Activated CD4-positive, alpha-beta memory T cell treated with anti-CD3 and anti-CD28 coated beads, Interleukin-2, amount 10 ng/mL, durations not matched to agents 7 days and 5 days (primary cell): ENCODE measurements at regions of chr19 and their contacts with region 1.

Region 1: GRCh38 chr19:38374429-38375176 is at the start of gene PSMD8:
- DNase-seq: peak; percentile 99
- H3K4me3 Mint-ChIP-seq: peak within 1 kb of the TSS; percentile 97
- H3K27ac Mint-ChIP-seq: peak within 1 kb of the TSS; percentile 92
- H3K4me1 Mint-ChIP-seq: peaks cover 30% of the 10 kb centered on the region
- H3K27me3 Mint-ChIP-seq: peaks cover 9% of the 10 kb centered on the region
- total RNA-seq, gene PSMD8: 167 to 178 TPM

Region 2: DNA sequence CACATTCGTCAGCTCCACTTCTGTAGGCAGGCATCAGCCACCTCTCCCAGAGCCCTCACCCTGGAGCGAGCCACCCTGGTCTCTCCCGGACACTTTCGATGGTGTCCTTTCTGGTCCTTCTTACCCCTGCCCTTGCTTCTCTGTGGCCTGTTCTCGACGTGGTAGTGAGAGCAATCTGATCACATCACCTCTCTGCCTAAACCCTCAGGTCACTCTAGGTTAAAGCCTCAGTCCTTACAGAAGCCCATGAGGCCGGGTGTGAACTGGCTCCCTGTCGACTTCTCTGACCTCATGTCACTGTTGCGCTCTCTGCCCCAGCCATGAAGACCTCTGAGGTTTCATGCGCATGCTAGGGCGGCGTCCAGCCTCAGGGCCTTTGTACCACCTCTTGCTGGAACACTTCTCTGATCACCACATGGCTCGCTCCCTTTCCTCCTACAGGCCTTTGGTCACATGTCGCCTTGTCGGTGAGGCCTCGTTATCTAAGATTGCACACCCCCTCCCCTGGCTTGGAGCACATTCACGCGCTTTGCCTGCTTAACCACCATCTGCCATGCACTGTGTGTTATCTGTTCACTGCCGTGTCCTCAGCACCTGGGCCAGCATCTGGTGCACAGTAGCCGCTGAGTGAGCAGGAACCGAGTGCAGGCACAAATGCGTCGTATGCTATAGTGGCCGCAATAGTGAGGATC is 252.1 kb before region 1 on chr19:
- CTCF ChIA-PET with region 1: no interaction called
- POLR2A ChIA-PET with region 1: no interaction called
- DNase-seq: no peak
- H3K4me3 Mint-ChIP-seq: no peak overlapping the region
- H3K27ac Mint-ChIP-seq: no peak overlapping the region
- H3K4me1 Mint-ChIP-seq: no peaks in the 10 kb centered on the region
- H3K27me3 Mint-ChIP-seq: no peaks in the 10 kb centered on the region

Region 3: DNA sequence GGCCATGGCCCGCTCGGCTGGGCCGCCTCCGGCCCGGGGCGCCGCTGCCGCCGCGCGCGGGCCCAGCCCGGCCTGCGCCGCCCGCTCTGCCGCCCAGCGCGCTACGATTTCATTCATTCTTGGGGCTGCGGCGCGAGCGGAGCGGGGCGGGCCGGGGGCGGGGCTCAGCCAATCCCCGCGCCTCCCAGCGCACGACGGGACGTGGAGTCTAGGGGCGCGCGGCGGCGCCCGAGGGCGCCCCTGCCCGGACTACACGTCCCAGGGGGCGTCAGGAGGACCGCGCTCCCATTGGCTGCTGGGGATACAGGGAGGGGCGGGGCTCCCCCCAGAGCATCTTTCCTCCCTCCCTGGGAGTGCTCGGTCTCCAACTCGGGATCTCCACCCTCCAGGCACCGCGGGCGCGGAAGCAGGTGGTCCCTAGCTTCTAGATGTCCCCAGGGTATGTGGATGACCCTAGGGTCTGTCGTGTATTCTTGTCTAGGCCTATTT is 145.0 kb before region 1 on chr19:
- CTCF ChIA-PET with region 1: interaction called, 12 read pairs
- POLR2A ChIA-PET with region 1: interaction called, 3 read pairs
- DNase-seq: peak; percentile 67
- H3K4me3 Mint-ChIP-seq: no peak overlapping the region
- H3K27ac Mint-ChIP-seq: no peak overlapping the region
- H3K4me1 Mint-ChIP-seq: peaks cover 7% of the 10 kb centered on the region
- H3K27me3 Mint-ChIP-seq: peaks cover 47% of the 10 kb centered on the region

Region 4: DNA sequence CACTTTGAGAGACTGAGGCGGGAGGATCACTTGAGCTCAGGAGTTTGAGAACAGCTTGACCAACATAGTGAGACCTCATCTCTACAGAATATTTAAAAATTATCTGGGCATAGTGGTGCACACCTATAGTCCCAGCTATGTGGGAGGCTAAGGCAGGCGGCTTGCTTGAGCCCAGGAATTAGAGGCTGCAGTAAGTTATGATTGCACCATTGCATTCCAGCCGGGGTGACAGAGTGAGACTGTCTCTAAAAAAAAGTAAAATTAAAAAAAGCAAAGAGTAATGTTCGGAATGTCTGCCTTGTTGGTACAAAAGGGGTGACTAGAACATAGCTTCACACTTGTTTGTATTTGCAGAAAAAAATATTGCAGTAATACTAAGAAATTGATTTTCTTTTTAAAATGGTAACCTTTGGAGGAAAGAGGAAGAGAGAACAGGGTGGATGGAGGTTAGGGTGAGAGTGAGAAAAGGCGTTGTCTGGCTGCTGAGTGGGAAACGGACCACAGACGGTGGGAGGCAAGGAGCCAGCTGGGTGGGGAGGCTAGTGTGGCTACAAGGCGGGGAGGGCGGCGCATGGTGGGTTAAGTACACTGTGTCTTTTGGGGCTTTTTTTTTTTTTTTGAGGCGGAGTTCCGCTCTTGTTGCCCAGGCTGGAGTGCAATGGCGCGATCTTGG is 128.6 kb before region 1 on chr19:
- CTCF ChIA-PET with region 1: interaction called, 20 read pairs
- POLR2A ChIA-PET with region 1: no interaction called
- DNase-seq: no peak
- H3K4me3 Mint-ChIP-seq: no peak overlapping the region
- H3K27ac Mint-ChIP-seq: no peak overlapping the region
- H3K4me1 Mint-ChIP-seq: peaks cover 5% of the 10 kb centered on the region
- H3K27me3 Mint-ChIP-seq: no peaks in the 10 kb centered on the region

Region 5: DNA sequence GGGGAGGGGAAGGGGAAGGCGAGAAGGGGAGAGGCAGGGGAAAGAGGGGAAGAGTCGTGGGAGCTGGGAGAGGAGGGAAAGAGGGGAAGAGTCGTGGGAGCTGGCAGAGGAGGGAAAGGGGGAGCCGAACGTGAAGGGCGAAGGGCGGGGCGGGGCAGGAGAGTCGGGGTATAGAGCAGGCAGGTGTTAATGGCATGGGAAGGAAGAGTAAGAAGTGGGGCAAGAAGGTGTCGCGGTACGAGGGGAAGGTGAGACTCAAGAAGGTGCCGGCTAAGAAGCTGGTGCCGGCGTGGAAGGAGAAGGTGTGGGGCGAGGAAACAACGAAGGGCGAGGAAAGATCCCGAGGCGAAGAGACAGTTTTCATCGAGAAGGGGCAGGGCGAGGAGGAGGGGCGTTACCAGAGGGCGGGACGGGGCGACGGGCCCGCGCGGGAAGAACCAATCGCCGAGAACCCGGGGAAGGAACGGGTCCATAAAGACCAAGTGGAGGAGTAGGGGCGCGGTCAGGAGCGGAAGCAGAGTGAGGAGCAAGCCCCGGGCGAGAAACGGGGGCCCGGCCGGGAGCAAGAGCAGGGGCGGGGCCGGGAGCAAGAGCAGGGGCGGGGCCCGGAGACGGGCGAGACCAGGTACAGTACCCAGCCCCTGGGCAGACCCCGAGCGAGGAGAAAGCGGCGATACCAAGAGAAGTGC is 38.5 kb before region 1 on chr19:
- CTCF ChIA-PET with region 1: interaction called, 45 read pairs
- POLR2A ChIA-PET with region 1: interaction called, 27 read pairs
- DNase-seq: peak; percentile 97
- H3K4me3 Mint-ChIP-seq: peak overlapping the region; percentile 82
- H3K27ac Mint-ChIP-seq: peak overlapping the region; percentile 95
- H3K4me1 Mint-ChIP-seq: peaks cover 12% of the 10 kb centered on the region
- H3K27me3 Mint-ChIP-seq: no peaks in the 10 kb centered on the region

Region 6: DNA sequence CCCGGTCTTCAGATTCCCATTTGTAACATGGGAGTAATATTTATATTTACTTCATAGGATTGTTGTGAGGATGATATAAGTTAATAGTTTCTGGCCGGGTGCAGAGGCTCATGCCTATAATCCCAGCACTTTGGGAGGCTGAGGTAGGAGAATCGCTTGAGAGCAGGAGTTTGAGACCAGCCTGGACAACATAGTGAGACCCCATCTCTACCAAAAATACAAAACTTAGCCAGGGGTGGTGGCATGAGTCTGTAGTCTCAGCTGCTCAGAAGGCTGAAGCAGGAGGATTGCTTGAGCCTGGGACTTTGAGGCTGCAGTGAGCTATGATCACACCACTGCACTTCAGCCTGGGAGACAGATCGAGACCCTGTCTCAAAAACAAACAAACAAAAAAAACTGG is 27.8 kb before region 1 on chr19:
- CTCF ChIA-PET with region 1: no interaction called
- POLR2A ChIA-PET with region 1: no interaction called
- DNase-seq: no peak
- H3K4me3 Mint-ChIP-seq: no peak overlapping the region
- H3K27ac Mint-ChIP-seq: no peak overlapping the region
- H3K4me1 Mint-ChIP-seq: no peaks in the 10 kb centered on the region
- H3K27me3 Mint-ChIP-seq: no peaks in the 10 kb centered on the region

Region 7: GRCh38 chr19:38361633-38362075 is 12.9 kb before region 1 on chr19:
- CTCF ChIA-PET with region 1: interaction called, 3 read pairs
- POLR2A ChIA-PET with region 1: interaction called, 17 read pairs
- DNase-seq: peak; percentile 81
- H3K4me3 Mint-ChIP-seq: peak overlapping the region; percentile 84
- H3K27ac Mint-ChIP-seq: peak overlapping the region; percentile 80
- H3K4me1 Mint-ChIP-seq: peaks cover 19% of the 10 kb centered on the region
- H3K27me3 Mint-ChIP-seq: peaks cover 36% of the 10 kb centered on the region

Region 8: GRCh38 chr19:38387550-38388348 is 13.1 kb after region 1 on chr19 and contains the start of gene GGN:
- CTCF ChIA-PET with region 1: interaction called, 19 read pairs
- POLR2A ChIA-PET with region 1: interaction called, 16 read pairs
- DNase-seq: peak; percentile 83
- H3K4me3 Mint-ChIP-seq: peak within 1 kb of the TSS; percentile 82
- H3K27ac Mint-ChIP-seq: peak within 1 kb of the TSS; percentile 66
- H3K4me1 Mint-ChIP-seq: peaks cover 33% of the 10 kb centered on the region
- H3K27me3 Mint-ChIP-seq: peaks cover 30% of the 10 kb centered on the region
- total RNA-seq, gene GGN: 0.28 to 0.40 TPM

Region 9: GRCh38 chr19:38394488-38394887 is 19.9 kb after region 1 on chr19:
- CTCF ChIA-PET with region 1: interaction called, 3 read pairs
- POLR2A ChIA-PET with region 1: interaction called, 19 read pairs
- DNase-seq: peak; percentile 77
- H3K4me3 Mint-ChIP-seq: peak overlapping the region; percentile 73
- H3K27ac Mint-ChIP-seq: peak overlapping the region; percentile 53
- H3K4me1 Mint-ChIP-seq: peaks cover 27% of the 10 kb centered on the region
- H3K27me3 Mint-ChIP-seq: peaks cover 20% of the 10 kb centered on the region